A549 (cell line): ENCODE measurements at regions of chr15 and their contacts with region 1.

Region 1: GRCh38 chr15:20356444-20356910 is 185.1 kb downstream of the GOLGA6L6 start:
- DNase-seq: peak; percentile 77 to 80
- ATAC-seq: peak; percentile 30 to 84
- H3K4me3 ChIP-seq: no peak overlapping the region
- H3K27ac ChIP-seq: no peak overlapping the region
- H3K4me1 ChIP-seq: no peaks in the 10 kb centered on the region
- CTCF ChIP-seq: peak; percentile 90
- EP300 ChIP-seq: no peak
- POLR2A ChIP-seq: no peak
- RAD21 ChIP-seq: peak; percentile 97 to 98

Region 2: GRCh38 chr15:20344601-20345400 is 11.7 kb before region 1 on chr15:
- CTCF ChIA-PET with region 1: interaction called, 36 read pairs
- POLR2A ChIA-PET with region 1: no interaction called
- DNase-seq: peak in 1 of 2 experiments; percentile 6
- ATAC-seq: no peak
- H3K4me3 ChIP-seq: no peak overlapping the region
- H3K27ac ChIP-seq: no peak overlapping the region
- H3K4me1 ChIP-seq: no peaks in the 10 kb centered on the region
- CTCF ChIP-seq: no peak
- EP300 ChIP-seq: no peak
- POLR2A ChIP-seq: no peak
- RAD21 ChIP-seq: no peak

Region 3: DNA sequence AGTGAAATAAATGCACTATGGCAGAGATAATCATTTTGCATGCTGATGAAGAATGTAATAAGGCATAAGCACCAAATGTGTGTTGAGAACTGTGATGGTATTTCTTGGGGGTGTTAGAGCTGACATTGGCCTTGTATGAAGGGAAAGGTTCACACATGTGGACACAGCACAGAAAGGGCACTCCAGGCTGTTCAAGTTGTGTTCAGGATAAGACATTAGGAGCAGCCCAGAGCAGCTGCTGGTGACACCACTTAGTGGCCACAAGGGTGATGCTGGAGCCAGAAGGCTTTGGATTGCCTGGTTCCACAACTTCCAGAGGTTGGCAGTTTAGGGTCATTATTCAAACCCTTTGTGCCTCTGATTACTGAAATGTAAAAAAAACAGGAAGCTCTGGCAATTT is 29.7 kb after region 1 on chr15:
- CTCF ChIA-PET with region 1: interaction called, 11 read pairs
- POLR2A ChIA-PET with region 1: no interaction called
- DNase-seq: no peak
- ATAC-seq: peak; percentile 40 to 43; a peak in 2 of 6 replicates
- H3K4me3 ChIP-seq: no peak overlapping the region
- H3K27ac ChIP-seq: no peak overlapping the region
- H3K4me1 ChIP-seq: no peaks in the 10 kb centered on the region
- CTCF ChIP-seq: no peak
- EP300 ChIP-seq: no peak
- POLR2A ChIP-seq: no peak
- RAD21 ChIP-seq: no peak